ENCODE measurements at regions of chr20 and their contacts with region 1.

Region 1: DNA sequence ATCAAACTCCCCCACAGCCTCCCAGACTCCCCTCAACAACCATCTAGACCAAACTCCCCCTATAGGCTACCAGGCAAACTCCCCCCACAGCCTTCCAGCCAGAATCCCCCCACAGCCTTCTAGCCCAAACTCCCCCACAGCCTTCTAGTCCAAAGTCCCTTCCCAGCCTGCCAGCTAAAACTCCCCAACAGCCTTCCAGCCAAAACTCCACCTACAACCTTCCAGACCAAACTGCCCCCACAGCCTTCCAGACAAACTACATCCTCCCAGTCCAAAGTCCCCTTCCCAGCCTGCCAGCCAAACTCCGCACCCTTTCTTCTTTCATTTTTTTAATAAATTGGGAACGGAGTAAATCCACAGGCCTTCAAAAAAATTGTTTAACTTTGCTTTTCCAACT is 37.4 kb upstream of the SYNDIG1 start:
- DNase-seq: peak; percentile 68
- H3K4me3 ChIP-seq: no peak overlapping the region
- H3K27ac ChIP-seq: no peak overlapping the region
- H3K4me1 ChIP-seq: peaks cover 1 to 9% (median 2%) of the 10 kb centered on the region in 4 donors
- H3K27me3 ChIP-seq: peaks cover 10% of the 10 kb centered on the region
- CTCF ChIP-seq: no peak
- EP300 ChIP-seq: no peak
- POLR2A ChIP-seq: no peak

Region 2: GRCh38 chr20:24257171-24257570 is 174.9 kb before region 1 on chr20:
- in situ Hi-C with region 1: no loop called
- intact Hi-C with region 1: no loop called
- DNase-seq: no peak
- H3K4me3 ChIP-seq: no peak overlapping the region
- H3K27ac ChIP-seq: no peak overlapping the region
- H3K4me1 ChIP-seq: no peaks in the 10 kb centered on the region
- H3K27me3 ChIP-seq: no peaks in the 10 kb centered on the region
- CTCF ChIP-seq: no peak
- EP300 ChIP-seq: no peak
- POLR2A ChIP-seq: no peak

Region 3: DNA sequence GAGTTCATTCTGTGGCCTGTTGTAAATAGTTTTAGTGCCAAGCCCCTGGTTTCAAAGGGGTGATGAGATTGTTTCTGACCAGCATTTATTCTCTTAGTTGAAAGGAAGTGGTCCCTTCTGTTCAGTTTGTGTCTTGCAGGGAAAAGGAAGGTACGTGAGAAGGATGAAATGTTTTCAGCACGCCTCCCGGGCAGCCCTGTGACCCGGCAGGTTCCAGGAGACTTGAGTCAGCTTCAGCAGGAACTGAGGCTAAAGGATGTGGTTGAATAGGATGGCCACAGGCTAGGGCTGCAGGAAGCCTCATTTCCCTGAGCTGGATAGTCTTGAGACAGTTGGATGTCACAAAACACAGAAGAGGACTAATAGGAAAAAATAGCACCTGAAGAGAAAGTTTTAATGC is 95.0 kb before region 1 on chr20:
- in situ Hi-C with region 1: loop called in 1 of 4 experiments (anchors 25 kb)
- intact Hi-C with region 1: no loop called
- DNase-seq: no peak
- H3K4me3 ChIP-seq: no peak overlapping the region
- H3K27ac ChIP-seq: no peak overlapping the region
- H3K4me1 ChIP-seq: no peaks in the 10 kb centered on the region
- H3K27me3 ChIP-seq: no peaks in the 10 kb centered on the region
- CTCF ChIP-seq: no peak
- EP300 ChIP-seq: no peak
- POLR2A ChIP-seq: no peak